CD8-positive, alpha-beta memory T cell (primary cell): ENCODE measurements at regions of chr15 and their contacts with region 1.

Region 1: GRCh38 chr15:48336940-48337339 is 5.7 kb downstream of the DUT start:
- DNase-seq: peak in 2 of 5 donors; percentile 9 to 10
- H3K4me3 ChIP-seq: no peak overlapping the region
- H3K4me3 Mint-ChIP-seq: no peak overlapping the region
- H3K27ac ChIP-seq: no peak overlapping the region
- H3K27ac Mint-ChIP-seq: peak overlapping the region in 2 of 8 donors; percentile 20 to 43
- H3K4me1 ChIP-seq: no peaks in the 10 kb centered on the region
- H3K4me1 Mint-ChIP-seq: peaks cover 13 to 24% (median 22%) of the 10 kb centered on the region in 3 donors
- H3K27me3 ChIP-seq: no peaks in the 10 kb centered on the region
- H3K27me3 Mint-ChIP-seq: no peaks in the 10 kb centered on the region

Region 2: GRCh38 chr15:48279608-48280007 is 57.3 kb before region 1 on chr15:
- CTCF ChIA-PET with region 1: no interaction called
- POLR2A ChIA-PET with region 1: no interaction called
- DNase-seq: no peak
- H3K4me3 ChIP-seq: no peak overlapping the region
- H3K4me3 Mint-ChIP-seq: no peak overlapping the region
- H3K27ac ChIP-seq: no peak overlapping the region
- H3K27ac Mint-ChIP-seq: no peak overlapping the region
- H3K4me1 ChIP-seq: no peaks in the 10 kb centered on the region
- H3K4me1 Mint-ChIP-seq: no peaks in the 10 kb centered on the region
- H3K27me3 ChIP-seq: no peaks in the 10 kb centered on the region
- H3K27me3 Mint-ChIP-seq: peaks cover 1 to 3% of the 10 kb centered on the region in 2 donors

Region 3: DNA sequence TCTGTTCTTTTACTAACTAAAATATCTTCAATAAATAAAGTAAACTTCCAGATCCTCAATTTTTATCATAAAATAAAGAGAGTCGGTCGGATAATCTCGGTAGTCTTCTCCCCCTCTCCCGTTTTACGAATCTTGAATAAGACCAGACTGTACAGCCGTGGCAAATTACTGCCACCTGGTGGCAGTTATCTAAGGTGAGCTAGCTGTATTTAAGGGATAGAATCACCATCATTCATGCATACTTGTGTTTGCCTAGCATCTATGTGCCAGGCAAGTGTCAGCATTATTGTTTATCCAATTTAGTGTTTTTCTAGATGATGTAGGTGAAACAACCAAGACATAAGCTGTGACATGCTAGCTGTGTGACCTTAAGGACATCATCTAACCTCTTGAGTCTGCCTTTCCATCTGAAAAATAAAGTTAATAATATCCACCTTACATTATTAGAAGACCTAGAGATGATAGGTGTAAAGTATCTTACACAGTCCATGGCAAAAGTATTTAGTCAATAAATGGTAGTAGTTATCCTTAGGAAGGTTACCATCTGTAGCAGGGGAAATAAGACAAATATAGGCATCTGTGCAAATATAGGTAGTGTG is 15.6 kb after region 1 on chr15:
- CTCF ChIA-PET with region 1: interaction called, 15 read pairs
- POLR2A ChIA-PET with region 1: no interaction called
- DNase-seq: peak in 4 of 5 donors; percentile 15 to 70 (median 44)
- H3K4me3 ChIP-seq: no peak overlapping the region
- H3K4me3 Mint-ChIP-seq: peak overlapping the region in 2 of 7 donors; percentile 41 to 44
- H3K27ac ChIP-seq: no peak overlapping the region
- H3K27ac Mint-ChIP-seq: no peak overlapping the region
- H3K4me1 ChIP-seq: no peaks in the 10 kb centered on the region
- H3K4me1 Mint-ChIP-seq: peaks cover 2 to 5% (median 3%) of the 10 kb centered on the region in 3 donors
- H3K27me3 ChIP-seq: no peaks in the 10 kb centered on the region
- H3K27me3 Mint-ChIP-seq: peaks cover 0 to 9% of the 10 kb centered on the region in 2 donors